Naive thymus-derived CD4-positive, alpha-beta T cell (primary cell): ENCODE measurements at regions of chr16 and their contacts with region 1.

Region 1: DNA sequence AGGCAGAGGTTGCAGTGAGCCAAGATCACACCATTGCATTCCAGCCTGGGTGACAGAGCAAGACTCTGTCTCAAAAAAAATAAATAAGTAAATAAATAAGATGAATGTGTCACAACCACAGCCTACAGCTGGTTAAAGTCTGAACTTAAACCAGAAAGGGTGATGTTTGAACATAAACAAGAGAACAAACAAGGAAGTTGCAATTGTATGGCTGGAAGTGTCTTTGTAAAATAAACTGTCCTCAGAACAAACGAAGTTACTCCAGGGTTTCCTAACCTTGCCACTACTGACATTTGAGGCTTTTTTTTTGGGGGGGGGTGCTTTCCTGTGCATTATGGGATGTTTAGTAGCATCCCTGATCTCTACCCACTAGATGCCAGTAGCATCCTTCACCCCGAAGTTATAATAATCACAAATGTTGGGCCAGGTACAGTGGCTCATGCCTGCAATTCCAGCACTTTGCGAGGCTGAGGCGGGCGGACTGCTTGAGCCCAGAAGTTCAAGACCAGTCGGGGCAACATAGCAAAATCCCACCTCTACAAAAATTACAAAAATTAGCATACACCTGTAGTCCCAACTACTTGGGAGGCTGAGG is 119.2 kb downstream of the XYLT1 start:
- DNase-seq: peak in 1 of 9 donors; percentile 14
- ATAC-seq: no peak
- H3K4me3 ChIP-seq: no peak overlapping the region
- H3K4me3 Mint-ChIP-seq: peak overlapping the region in 4 of 10 donors; percentile 20 to 27 (median 24)
- H3K27ac ChIP-seq: no peak overlapping the region
- H3K27ac Mint-ChIP-seq: peak overlapping the region in 6 of 9 donors; percentile 47 to 90 (median 60)
- H3K4me1 ChIP-seq: peaks cover 10 to 35% of the 10 kb centered on the region in 2 donors
- H3K4me1 Mint-ChIP-seq: peaks cover 46 to 82% (median 78%) of the 10 kb centered on the region in 7 donors
- H3K27me3 ChIP-seq: no peaks in the 10 kb centered on the region
- H3K27me3 Mint-ChIP-seq: no peaks in the 10 kb centered on the region

Region 2: DNA sequence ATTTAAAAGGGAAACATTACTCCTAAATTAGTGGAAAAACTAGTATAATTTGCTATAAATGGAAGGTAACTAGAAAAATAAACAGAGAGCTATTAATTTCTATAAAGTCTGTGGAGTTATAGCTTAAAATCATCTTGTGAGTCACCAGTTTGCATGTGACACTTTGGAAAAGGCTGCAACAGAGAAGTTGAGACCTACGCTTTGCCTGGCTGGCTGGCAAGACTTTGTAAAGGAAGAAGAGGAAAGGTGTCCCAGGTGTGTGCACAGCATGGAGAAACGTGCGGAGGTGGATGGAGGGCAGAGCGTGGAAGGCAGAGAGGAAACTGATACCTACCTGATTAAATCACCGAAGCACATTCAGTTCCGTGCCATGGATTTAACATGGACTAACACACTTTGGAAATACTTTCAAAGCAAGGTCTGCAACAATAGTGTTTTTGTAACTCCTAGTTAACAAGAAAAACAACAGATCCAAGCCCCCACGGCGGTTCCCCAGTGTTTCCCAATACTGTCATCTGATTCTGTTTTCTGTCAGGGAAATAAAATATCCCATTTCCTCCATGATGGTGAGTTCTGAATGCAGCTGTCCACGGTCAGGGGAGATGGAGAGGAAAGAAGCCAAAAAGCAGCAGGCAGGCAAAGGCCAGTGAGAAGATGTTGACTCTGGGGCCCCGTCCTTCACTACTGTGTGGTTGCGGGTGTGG is 15.6 kb before region 1 on chr16:
- CTCF ChIA-PET with region 1: no interaction called
- POLR2A ChIA-PET with region 1: no interaction called
- intact Hi-C with region 1: loop called in 1 of 2 experiments (anchors 2 kb)
- DNase-seq: no peak
- ATAC-seq: no peak
- H3K4me3 ChIP-seq: no peak overlapping the region
- H3K4me3 Mint-ChIP-seq: no peak overlapping the region
- H3K27ac ChIP-seq: no peak overlapping the region
- H3K27ac Mint-ChIP-seq: peak overlapping the region in 6 of 9 donors; percentile 42 to 58 (median 51)
- H3K4me1 ChIP-seq: peaks cover 7 to 19% of the 10 kb centered on the region in 2 donors
- H3K4me1 Mint-ChIP-seq: peaks cover 23 to 62% (median 41%) of the 10 kb centered on the region in 7 donors
- H3K27me3 ChIP-seq: no peaks in the 10 kb centered on the region
- H3K27me3 Mint-ChIP-seq: no peaks in the 10 kb centered on the region

Region 3: GRCh38 chr16:17476414-17477270 is 125.1 kb after region 1 on chr16:
- CTCF ChIA-PET with region 1: no interaction called
- POLR2A ChIA-PET with region 1: no interaction called
- intact Hi-C with region 1: no loop called
- DNase-seq: peak in 6 of 9 donors; percentile 36 to 56 (median 48)
- ATAC-seq: peak; percentile 80
- H3K4me3 ChIP-seq: no peak overlapping the region
- H3K4me3 Mint-ChIP-seq: peak overlapping the region in 1 of 10 donors; percentile 7
- H3K27ac ChIP-seq: no peak overlapping the region
- H3K27ac Mint-ChIP-seq: peak overlapping the region in 4 of 9 donors; percentile 10 to 50 (median 30)
- H3K4me1 ChIP-seq: peaks cover 10 to 13% of the 10 kb centered on the region in 2 donors
- H3K4me1 Mint-ChIP-seq: peaks cover 21 to 33% (median 28%) of the 10 kb centered on the region in 7 donors
- H3K27me3 ChIP-seq: no peaks in the 10 kb centered on the region
- H3K27me3 Mint-ChIP-seq: peaks cover 0 to 40% (median 7%) of the 10 kb centered on the region in 5 donors